Activated CD8-positive, alpha-beta T cell treated with anti-CD3 and anti-CD28 coated beads, Interleukin-2, amount 10 ng/mL, durations not matched to agents 7 days and 5 days (primary cell): ENCODE measurements at regions of chr6 and their contacts with region 1.

Region 1: DNA sequence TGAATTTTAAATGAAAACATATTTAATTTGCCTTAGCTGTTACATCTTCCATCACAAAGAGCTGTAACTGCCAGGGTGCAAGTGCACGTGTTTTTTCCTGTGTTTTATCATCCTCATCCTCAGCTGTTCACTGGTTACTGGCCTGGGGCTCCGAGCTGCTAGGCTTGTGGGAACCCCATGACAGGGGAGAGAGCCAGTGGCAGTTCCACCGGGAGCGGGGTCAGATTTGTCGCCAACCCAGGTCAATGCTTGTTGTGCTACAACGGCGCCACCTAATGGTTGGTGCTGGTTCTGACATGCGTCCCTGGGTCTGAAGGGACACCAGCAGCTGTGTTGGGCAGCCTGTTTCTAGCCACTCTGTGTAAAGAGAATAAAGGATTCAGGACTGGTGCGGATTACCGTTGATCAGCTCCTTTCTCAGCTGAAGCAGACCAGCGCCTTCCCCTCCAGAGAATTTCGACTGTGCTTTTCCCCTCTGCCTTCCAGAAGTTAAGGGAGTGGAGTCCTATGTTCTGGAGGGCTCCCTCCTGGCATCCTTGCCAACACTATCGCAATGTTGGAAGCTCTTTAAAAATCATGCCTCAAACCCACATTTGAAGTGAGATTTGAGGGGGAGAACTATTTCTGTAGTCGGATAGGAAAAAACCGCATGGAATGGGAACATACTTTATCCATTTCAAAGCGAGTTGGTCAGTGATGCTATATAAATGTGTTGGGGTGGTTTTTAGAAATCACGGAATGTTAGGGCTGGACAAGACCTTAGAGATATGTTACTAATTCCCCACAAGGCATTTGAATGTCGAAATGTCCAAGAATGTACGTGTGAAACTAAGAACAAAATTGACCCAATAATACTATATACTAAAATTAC is 32.1 kb downstream of the SUMO4 start:
- DNase-seq: peak; percentile 94
- ATAC-seq: peak; percentile 95
- H3K4me3 Mint-ChIP-seq: peak overlapping the region; percentile 61
- H3K27ac Mint-ChIP-seq: peak overlapping the region; percentile 82
- H3K4me1 Mint-ChIP-seq: peaks cover 13% of the 10 kb centered on the region
- H3K27me3 Mint-ChIP-seq: no peaks in the 10 kb centered on the region

Region 2: GRCh38 chr6:149043476-149044130 is 388.5 kb before region 1 on chr6:
- CTCF ChIA-PET with region 1: interaction called, 45 read pairs
- POLR2A ChIA-PET with region 1: no interaction called
- DNase-seq: peak; percentile 52
- ATAC-seq: no peak
- H3K4me3 Mint-ChIP-seq: no peak overlapping the region
- H3K27ac Mint-ChIP-seq: no peak overlapping the region
- H3K4me1 Mint-ChIP-seq: peaks cover 52% of the 10 kb centered on the region
- H3K27me3 Mint-ChIP-seq: no peaks in the 10 kb centered on the region

Region 3: GRCh38 chr6:149082286-149082707 is 349.8 kb before region 1 on chr6:
- CTCF ChIA-PET with region 1: interaction called, 31 read pairs
- POLR2A ChIA-PET with region 1: interaction called, 3 read pairs
- DNase-seq: peak; percentile 95
- ATAC-seq: peak; percentile 90
- H3K4me3 Mint-ChIP-seq: peak overlapping the region; percentile 15
- H3K27ac Mint-ChIP-seq: peak overlapping the region; percentile 5
- H3K4me1 Mint-ChIP-seq: peaks cover 73% of the 10 kb centered on the region
- H3K27me3 Mint-ChIP-seq: no peaks in the 10 kb centered on the region

Region 4: DNA sequence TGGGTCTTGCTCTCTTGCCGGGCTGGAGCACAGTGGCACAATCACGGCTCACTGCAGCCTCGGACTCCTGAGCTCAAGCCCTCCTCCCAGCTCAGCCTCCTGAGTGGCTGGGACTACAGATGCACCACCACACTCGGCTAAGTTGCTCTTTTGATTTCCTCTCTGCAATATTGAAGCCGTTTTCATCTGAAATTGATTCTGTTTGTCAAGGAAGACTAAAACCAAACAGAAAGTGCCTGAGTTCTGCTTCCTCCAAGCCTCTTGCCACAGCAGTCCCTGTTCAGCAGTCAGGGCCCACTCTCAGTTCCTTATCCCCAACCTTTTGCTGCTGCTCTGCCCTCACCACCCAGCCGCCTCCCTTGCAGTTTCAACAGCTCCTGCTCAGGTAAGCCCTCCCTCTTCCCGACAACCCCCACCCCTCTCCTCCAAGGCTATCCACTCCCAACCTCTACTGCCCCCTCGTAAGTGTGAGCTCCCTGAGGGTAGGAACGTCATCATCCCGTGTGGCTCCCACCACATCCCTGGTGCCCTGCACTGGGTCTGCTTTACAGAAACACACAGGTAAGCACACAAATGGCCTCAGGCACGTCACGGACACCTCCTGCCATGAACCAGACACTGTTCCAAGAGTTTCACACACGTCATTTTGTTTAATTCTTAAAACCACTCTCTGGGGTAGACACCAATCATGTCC is 185.3 kb before region 1 on chr6:
- CTCF ChIA-PET with region 1: no interaction called
- POLR2A ChIA-PET with region 1: no interaction called
- DNase-seq: no peak
- ATAC-seq: no peak
- H3K4me3 Mint-ChIP-seq: no peak overlapping the region
- H3K27ac Mint-ChIP-seq: peak overlapping the region; percentile 81
- H3K4me1 Mint-ChIP-seq: peaks cover 37% of the 10 kb centered on the region
- H3K27me3 Mint-ChIP-seq: no peaks in the 10 kb centered on the region

Region 5: DNA sequence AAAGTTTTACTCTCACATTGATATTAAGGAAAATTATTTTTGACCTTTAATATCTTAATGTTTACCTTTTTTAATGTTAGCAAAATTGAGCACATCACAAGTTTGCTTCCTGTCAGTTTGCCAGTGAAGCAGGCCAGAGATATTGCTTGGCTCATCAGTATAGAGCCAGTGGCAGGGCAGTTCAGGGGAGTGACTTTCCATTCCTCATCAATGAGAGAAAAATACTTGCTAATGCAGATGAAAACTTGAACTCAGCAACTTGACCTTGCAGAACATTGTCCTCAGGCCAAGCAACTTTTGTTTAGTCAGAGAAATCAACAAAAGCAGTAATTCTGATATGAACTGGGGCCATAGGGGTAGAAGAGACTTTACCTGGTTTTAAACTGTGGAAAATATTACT is 107.7 kb before region 1 on chr6:
- CTCF ChIA-PET with region 1: interaction called, 21 read pairs
- POLR2A ChIA-PET with region 1: no interaction called
- DNase-seq: no peak
- ATAC-seq: peak; percentile 43
- H3K4me3 Mint-ChIP-seq: peak overlapping the region; percentile 30
- H3K27ac Mint-ChIP-seq: no peak overlapping the region
- H3K4me1 Mint-ChIP-seq: peaks cover 75% of the 10 kb centered on the region
- H3K27me3 Mint-ChIP-seq: no peaks in the 10 kb centered on the region

Region 6: GRCh38 chr6:149419696-149420404 is 12.3 kb before region 1 on chr6:
- CTCF ChIA-PET with region 1: interaction called, 19 read pairs
- POLR2A ChIA-PET with region 1: no interaction called
- DNase-seq: no peak
- ATAC-seq: no peak
- H3K4me3 Mint-ChIP-seq: no peak overlapping the region
- H3K27ac Mint-ChIP-seq: no peak overlapping the region
- H3K4me1 Mint-ChIP-seq: peaks cover 4% of the 10 kb centered on the region
- H3K27me3 Mint-ChIP-seq: no peaks in the 10 kb centered on the region

Region 7: DNA sequence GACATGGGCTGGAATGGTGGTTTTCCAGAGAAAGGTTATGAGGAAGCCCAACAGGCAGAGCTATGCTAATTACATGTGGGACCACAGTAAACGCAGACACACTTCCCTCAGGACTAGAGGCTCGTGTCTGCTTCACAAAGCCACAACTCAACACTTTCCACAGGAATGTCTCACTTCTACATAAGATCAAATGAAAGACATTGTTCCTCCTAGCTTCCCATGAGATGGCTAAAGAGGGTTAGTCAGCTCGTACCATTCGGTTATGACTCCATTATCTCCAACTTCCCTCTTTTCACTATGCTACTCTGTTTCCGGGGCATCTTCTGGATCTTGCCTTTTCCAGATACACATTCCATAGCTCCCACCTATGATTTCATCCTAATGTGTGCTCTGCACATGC is 81.8 kb after region 1 on chr6:
- CTCF ChIA-PET with region 1: interaction called, 66 read pairs
- POLR2A ChIA-PET with region 1: no interaction called
- DNase-seq: no peak
- ATAC-seq: no peak
- H3K4me3 Mint-ChIP-seq: no peak overlapping the region
- H3K27ac Mint-ChIP-seq: no peak overlapping the region
- H3K4me1 Mint-ChIP-seq: peaks cover 10% of the 10 kb centered on the region
- H3K27me3 Mint-ChIP-seq: no peaks in the 10 kb centered on the region